AG04449 (cell line): ENCODE measurements at regions of chr10 and their contacts with region 1.

Region 1: GRCh38 chr10:14478604-14479003 is 147.9 kb upstream of the FRMD4A start:
- DNase-seq: peak; percentile 40
- H3K4me3 ChIP-seq: no peak overlapping the region
- CTCF ChIP-seq: peak; percentile 61

Region 2: GRCh38 chr10:14200698-14201544 is 277.7 kb before region 1 on chr10:
- CTCF ChIA-PET with region 1: interaction called, 154 read pairs
- POLR2A ChIA-PET with region 1: interaction called, 3 read pairs
- DNase-seq: no peak
- H3K4me3 ChIP-seq: no peak overlapping the region
- CTCF ChIP-seq: no peak

Region 3: GRCh38 chr10:14429043-14429700 is 49.4 kb before region 1 on chr10:
- CTCF ChIA-PET with region 1: no interaction called
- POLR2A ChIA-PET with region 1: no interaction called
- DNase-seq: no peak
- H3K4me3 ChIP-seq: no peak overlapping the region
- CTCF ChIP-seq: no peak

Region 4: DNA sequence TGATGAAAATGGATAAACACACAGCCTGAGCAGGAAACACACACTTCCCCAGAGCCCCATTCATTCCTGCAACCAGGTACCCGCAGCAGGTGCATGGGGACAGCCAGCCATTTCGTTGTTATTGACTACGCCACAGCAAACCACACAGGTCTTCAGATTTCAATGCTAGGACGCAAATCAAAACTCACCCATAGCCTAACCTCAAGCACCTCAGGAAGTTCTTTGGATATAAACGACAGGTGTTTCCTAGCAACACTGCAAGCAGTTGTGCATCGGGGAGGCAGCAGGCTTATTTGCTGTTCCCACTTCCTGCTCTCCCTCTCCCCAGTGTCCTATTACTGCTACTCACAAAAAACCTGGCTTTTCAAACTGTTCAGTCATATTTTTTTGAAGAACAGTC is 28.6 kb after region 1 on chr10:
- CTCF ChIA-PET with region 1: no interaction called
- POLR2A ChIA-PET with region 1: no interaction called
- DNase-seq: no peak
- H3K4me3 ChIP-seq: no peak overlapping the region
- CTCF ChIP-seq: no peak